ENCODE measurements at regions of chr1 and their contacts with region 1.

Region 1: GRCh38 chr1:26695356-26696118 is at the start of gene ARID1A:
- DNase-seq: peak; percentile 96
- H3K4me3 Mint-ChIP-seq: peak within 1 kb of the TSS; percentile 90
- H3K27ac Mint-ChIP-seq: peak within 1 kb of the TSS; percentile 96
- H3K4me1 Mint-ChIP-seq: peaks cover 31% of the 10 kb centered on the region
- H3K27me3 Mint-ChIP-seq: no peaks in the 10 kb centered on the region
- total RNA-seq, gene ARID1A: 130 and 132 TPM in 2 replicates

Region 2: GRCh38 chr1:26684763-26685508 is 10.6 kb before region 1 on chr1:
- intact Hi-C with region 1: no loop called
- DNase-seq: no peak
- H3K4me3 Mint-ChIP-seq: no peak overlapping the region
- H3K27ac Mint-ChIP-seq: no peak overlapping the region
- H3K4me1 Mint-ChIP-seq: peaks cover 19% of the 10 kb centered on the region
- H3K27me3 Mint-ChIP-seq: no peaks in the 10 kb centered on the region

Region 3: GRCh38 chr1:26833432-26834405 is 138.2 kb after region 1 on chr1:
- intact Hi-C with region 1: loop called (anchors 2 kb)
- DNase-seq: peak; percentile 89
- H3K4me3 Mint-ChIP-seq: peak overlapping the region; percentile 75
- H3K27ac Mint-ChIP-seq: peak overlapping the region; percentile 99
- H3K4me1 Mint-ChIP-seq: peaks cover 69% of the 10 kb centered on the region
- H3K27me3 Mint-ChIP-seq: no peaks in the 10 kb centered on the region

Measured in activated T-helper 1 cell treated with anti-CD3 and anti-CD28 coated beads, Interleukin-12 subunit alpha, Interleukin-12 subunit beta, Interleukin-2, Interleukin-4 antibody, amounts not matched to agents 30 ng/mL and 10 ng/mL and 1 ng/mL, durations not matched to agents 14 hours and 24 hours and 36 hours (primary cell).